Sciatic nerve (tissue), 2 donors: ENCODE measurements at regions of chr1 and their contacts with region 1.

Region 1: DNA sequence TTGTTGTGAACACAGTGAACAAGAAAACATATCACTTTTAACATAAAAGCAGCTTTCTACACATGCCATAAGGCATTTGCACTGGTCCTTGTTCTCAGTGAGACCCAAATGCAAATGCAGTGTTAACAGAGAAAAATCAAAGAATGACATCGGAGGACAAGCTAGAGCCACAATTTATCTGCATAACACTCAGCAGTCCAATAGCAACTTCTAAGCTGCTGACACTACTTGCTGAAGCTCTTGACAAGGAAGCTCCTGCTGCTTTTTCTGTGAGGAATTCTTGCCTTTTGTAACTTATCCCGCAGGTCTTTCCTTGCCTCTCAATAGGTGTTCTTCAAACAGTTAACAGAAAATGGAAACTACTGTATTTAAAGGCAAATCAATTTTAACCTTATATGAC is 34.7 kb downstream of the USH2A start:
- DNase-seq: no peak
- ATAC-seq: no peak

Region 2: GRCh38 chr1:216461466-216461865 is 72.9 kb after region 1 on chr1:
- intact Hi-C with region 1: loop called (anchors 2 kb)
- DNase-seq: no peak
- ATAC-seq: no peak

Region 3: GRCh38 chr1:217791091-217791490 is 1402.5 kb after region 1 on chr1:
- intact Hi-C with region 1: loop called (anchors 5 kb)
- DNase-seq: no peak
- ATAC-seq: no peak

Region 4: GRCh38 chr1:218250492-218250891 is 1861.9 kb after region 1 on chr1:
- intact Hi-C with region 1: no loop called
- DNase-seq: no peak
- ATAC-seq: no peak